Dorsolateral prefrontal cortex (tissue), 120 donors: ENCODE measurements at regions of chrX and their contacts with region 1.

Region 1: GRCh38 chrX:106894392-106894909 is 8.7 kb downstream of the RIPPLY1 start:
- DNase-seq: peak in 9 of 10 donors; percentile 23 to 64 (median 53)
- H3K4me3 ChIP-seq: no peak overlapping the region
- H3K27ac ChIP-seq: no peak overlapping the region
- H3K27me3 ChIP-seq: peaks cover 0 to 94% (median 36%) of the 10 kb centered on the region in 45 donors
- CTCF ChIP-seq: peak in 55 of 56 donors; percentile 51 to 90 (median 79)

Region 2: GRCh38 chrX:106955004-106955772 is 60.7 kb after region 1 on chrX:
- intact Hi-C with region 1: loop called in 1 of 2 experiments (anchors 2 kb)
- DNase-seq: no peak
- H3K4me3 ChIP-seq: no peak overlapping the region
- H3K27ac ChIP-seq: no peak overlapping the region
- H3K27me3 ChIP-seq: peaks cover 0 to 79% (median 22%) of the 10 kb centered on the region in 45 donors
- CTCF ChIP-seq: no peak

Region 3: DNA sequence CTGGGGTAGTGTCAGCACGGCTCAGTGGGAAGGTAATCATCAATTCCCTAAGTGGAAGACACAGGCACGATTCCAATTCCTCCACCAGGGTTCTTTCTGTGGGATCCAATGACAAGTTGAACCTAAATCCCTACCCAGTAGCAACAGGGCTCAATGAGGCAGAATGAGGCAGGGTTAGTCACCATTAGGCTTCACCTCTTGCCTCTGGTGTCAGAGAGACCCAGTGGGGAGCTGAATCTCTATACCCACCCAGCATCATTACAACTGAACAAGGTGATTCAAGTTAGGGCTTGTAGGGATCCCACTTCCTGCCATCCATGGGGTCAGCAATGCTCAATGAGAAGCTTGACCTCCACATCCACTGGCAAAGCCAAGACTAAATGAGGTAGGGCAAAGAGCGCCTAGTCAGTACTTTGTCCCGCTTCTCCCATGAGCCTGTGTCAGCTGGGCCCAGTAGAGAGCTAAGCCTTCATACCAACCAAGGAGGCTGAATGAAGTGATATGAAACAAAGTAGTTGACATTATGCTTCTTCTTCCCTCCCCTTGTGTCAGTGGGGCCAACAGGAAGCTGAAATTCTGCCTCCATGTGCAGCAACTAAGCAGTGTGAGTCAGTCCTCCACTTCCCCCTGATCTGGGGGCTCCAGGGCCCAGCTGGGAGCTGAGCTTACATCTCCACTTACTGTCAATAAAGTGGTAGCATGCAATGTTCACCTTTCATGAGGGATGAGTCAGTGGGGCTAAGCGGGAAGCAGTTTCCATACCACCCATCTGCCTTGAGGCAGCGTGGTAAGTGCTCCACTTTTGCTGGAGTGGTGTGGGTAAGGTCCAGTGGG is 260.6 kb after region 1 on chrX:
- intact Hi-C with region 1: no loop called
- DNase-seq: no peak
- H3K4me3 ChIP-seq: no peak overlapping the region
- H3K27ac ChIP-seq: no peak overlapping the region
- H3K27me3 ChIP-seq: peaks cover 0 to 50% (median 11%) of the 10 kb centered on the region in 45 donors
- CTCF ChIP-seq: no peak

Region 4: DNA sequence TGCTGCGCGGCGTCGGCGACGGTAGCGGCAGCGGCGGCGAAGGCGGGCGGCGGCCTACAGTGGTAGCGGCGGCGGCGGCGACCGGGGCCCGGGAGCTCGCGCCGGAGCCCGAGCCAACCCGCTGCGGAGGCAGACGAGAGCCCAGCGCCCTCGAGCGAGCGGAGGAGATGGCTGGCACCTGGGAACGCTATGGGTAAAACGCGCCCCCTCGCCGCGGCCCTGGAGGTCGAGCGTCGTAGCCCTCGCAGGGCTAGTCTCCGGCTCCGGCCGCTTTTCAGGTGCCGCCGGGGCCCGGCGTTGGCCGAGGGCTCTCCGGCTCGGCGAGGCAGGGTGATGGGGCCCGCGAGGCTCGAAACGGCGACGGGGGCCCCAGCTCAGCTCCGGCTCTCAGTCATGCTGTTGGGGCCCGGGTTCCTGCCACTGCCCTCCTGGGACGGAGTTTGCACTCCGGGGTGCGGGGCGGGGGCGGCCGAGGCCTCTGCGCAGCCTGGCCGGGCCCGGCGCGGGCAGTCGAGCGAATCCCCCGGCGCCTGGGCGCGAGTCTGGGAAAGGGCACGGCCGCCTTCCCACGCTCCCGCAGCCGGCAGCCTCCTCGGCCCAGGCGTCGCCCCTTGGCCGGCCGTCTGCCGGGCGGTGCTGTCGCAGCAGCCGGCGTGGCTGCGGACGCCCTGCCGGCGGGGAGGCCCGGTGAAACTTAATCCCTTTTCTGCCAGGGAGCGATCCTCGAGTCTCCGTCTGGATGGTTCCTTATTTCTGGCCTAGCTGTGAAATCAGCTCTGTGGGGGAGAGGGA is 932.0 kb after region 1 on chrX:
- intact Hi-C with region 1: loop called in 1 of 2 experiments (anchors 10 kb)
- DNase-seq: peak in 5 of 10 donors; percentile 14 to 56 (median 39)
- H3K4me3 ChIP-seq: peak overlapping the region; percentile 34 to 71 (median 57)
- H3K27ac ChIP-seq: peak overlapping the region in 55 of 59 donors; percentile 1 to 88 (median 77)
- H3K27me3 ChIP-seq: peaks cover 0 to 57% (median 11%) of the 10 kb centered on the region in 45 donors
- CTCF ChIP-seq: no peak